H1 (cell line): ENCODE measurements at regions of chr19 and their contacts with region 1.

Region 1: DNA sequence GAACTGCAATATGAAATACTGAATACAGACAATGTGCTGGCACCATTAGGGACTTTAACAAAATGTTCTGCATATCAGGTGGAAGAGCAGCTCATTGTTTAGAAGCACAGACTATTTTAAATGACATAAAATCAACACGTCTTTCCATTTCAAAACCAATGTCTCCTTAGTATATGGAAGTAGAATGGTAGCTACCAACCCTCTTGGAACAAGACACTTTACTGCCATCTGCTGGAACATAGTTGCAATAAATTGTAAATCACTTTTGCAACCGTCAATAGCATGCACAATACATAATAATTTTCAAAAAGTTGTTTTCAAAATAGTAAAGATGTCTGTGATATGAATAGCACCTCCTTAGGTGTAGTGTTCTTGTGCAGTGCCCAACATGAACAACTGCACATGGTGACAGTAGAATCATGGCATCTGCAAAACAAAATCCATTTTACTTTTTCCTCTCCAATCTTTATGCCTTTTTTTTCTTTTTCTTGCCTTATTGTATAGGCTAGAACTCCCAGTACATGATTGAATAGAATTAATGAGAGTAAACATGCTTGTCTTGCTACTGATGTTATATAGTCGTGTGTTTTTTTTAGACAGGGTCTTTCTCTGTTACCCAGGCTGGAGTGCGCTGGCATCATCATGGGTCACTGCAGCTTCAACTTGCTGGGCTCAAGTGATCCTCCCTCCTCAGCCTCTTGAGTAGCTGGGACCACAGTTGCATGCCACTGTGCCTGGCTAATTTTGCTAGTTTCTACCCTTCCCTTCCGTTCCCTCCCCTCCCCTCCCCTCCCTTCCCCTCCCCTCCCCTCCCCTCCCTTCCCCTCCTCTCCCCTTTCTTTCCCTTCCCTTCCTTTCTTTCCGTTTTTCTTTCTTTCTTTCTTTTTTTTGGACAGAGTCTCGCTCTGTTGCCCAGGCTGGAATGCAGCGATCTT is 7.8 kb upstream of the LYPD5 start:
- DNase-seq: no peak
- H3K4me3 ChIP-seq: no peak overlapping the region
- H3K27ac ChIP-seq: no peak overlapping the region
- H3K4me1 ChIP-seq: no peaks in the 10 kb centered on the region
- H3K27me3 ChIP-seq: no peaks in the 10 kb centered on the region; a peak in 1 of 7 replicates
- CTCF ChIP-seq: peak in 2 of 3 experiments; percentile 40 to 46; a peak in 2 of 4 replicates
- EP300 ChIP-seq: no peak
- POLR2A ChIP-seq: no peak
- RAD21 ChIP-seq: peak; percentile 73

Region 2: GRCh38 chr19:43606569-43607229 is 203.3 kb before region 1 on chr19:
- CTCF ChIA-PET with region 1: no interaction called
- POLR2A ChIA-PET with region 1: no interaction called
- DNase-seq: no peak
- H3K4me3 ChIP-seq: no peak overlapping the region
- H3K27ac ChIP-seq: no peak overlapping the region
- H3K4me1 ChIP-seq: no peaks in the 10 kb centered on the region
- H3K27me3 ChIP-seq: no peaks in the 10 kb centered on the region
- CTCF ChIP-seq: no peak
- EP300 ChIP-seq: no peak
- POLR2A ChIP-seq: no peak
- RAD21 ChIP-seq: no peak

Region 3: GRCh38 chr19:43743022-43743421 is 67.0 kb before region 1 on chr19:
- CTCF ChIA-PET with region 1: interaction called, 23 read pairs
- POLR2A ChIA-PET with region 1: interaction called, 3 read pairs
- DNase-seq: no peak
- H3K4me3 ChIP-seq: no peak overlapping the region
- H3K27ac ChIP-seq: no peak overlapping the region
- H3K4me1 ChIP-seq: no peaks in the 10 kb centered on the region
- H3K27me3 ChIP-seq: no peaks in the 10 kb centered on the region
- CTCF ChIP-seq: no peak
- EP300 ChIP-seq: no peak
- POLR2A ChIP-seq: no peak
- RAD21 ChIP-seq: no peak

Region 4: GRCh38 chr19:43765109-43765876 is 44.7 kb before region 1 on chr19:
- CTCF ChIA-PET with region 1: interaction called, 67 read pairs
- POLR2A ChIA-PET with region 1: no interaction called
- DNase-seq: no peak
- H3K4me3 ChIP-seq: no peak overlapping the region
- H3K27ac ChIP-seq: no peak overlapping the region
- H3K4me1 ChIP-seq: peaks cover 0 to 4% (median 2%) of the 10 kb centered on the region in 4 experiments; a peak in 3 of 7 replicates
- H3K27me3 ChIP-seq: peaks cover 0 to 4% (median 0%) of the 10 kb centered on the region in 4 experiments; a peak in 2 of 7 replicates
- CTCF ChIP-seq: no peak
- EP300 ChIP-seq: no peak
- POLR2A ChIP-seq: no peak
- RAD21 ChIP-seq: no peak

Region 5: GRCh38 chr19:43798026-43798545 is 11.9 kb before region 1 on chr19:
- CTCF ChIA-PET with region 1: interaction called, 11 read pairs
- POLR2A ChIA-PET with region 1: no interaction called
- DNase-seq: no peak
- H3K4me3 ChIP-seq: peak overlapping the region; percentile 58 to 69 (median 60)
- H3K27ac ChIP-seq: no peak overlapping the region
- H3K4me1 ChIP-seq: peaks cover 0 to 5% (median 3%) of the 10 kb centered on the region in 4 experiments; a peak in 5 of 7 replicates
- H3K27me3 ChIP-seq: peaks cover 4 to 36% (median 24%) of the 10 kb centered on the region in 4 experiments
- CTCF ChIP-seq: no peak
- EP300 ChIP-seq: no peak
- POLR2A ChIP-seq: no peak
- RAD21 ChIP-seq: no peak

Region 6: DNA sequence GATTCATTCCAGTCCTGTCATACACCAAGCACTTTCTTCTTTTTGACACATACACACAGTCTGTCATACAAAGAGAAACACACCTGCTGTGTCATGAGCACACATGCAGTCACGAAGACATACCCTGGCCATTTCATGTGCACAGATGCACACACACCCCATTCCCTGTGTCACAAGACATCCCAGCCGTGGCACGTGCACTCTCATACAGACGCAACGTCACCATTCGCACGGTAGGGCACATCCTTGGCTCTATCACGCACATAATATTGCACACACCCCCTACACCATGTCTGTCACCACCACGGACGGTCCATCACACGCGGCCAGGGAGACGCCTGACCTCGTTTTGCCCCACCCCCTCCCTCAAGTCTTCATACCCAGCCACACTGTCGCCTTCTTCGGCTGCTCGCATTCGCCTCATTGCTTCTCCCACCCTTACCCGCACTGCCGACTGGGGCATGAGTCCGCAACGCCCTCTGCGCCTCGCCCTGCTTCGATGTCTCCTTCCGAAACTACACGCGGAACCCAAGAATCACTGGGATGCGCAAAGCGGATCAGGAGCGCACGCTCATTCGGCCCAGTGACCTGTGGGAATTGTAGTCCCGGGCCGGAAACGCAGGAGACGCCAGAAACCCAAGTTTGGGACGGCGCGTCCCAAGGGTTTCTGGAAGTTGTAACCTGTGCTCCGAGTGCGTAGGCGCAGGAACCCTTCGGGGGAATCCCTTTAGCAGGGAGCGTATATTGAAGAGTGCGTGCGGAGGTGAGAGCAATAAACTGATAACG is 10.3 kb after region 1 on chr19:
- CTCF ChIA-PET with region 1: interaction called, 13 read pairs
- POLR2A ChIA-PET with region 1: interaction called, 3 read pairs
- DNase-seq: peak in 1 of 2 experiments; percentile 44
- H3K4me3 ChIP-seq: peak overlapping the region in 2 of 4 experiments; percentile 25 to 37; a peak in 2 of 8 replicates
- H3K27ac ChIP-seq: no peak overlapping the region
- H3K4me1 ChIP-seq: no peaks in the 10 kb centered on the region; a peak in 1 of 7 replicates
- H3K27me3 ChIP-seq: peaks cover 0 to 11% (median 2%) of the 10 kb centered on the region in 4 experiments; a peak in 3 of 7 replicates
- CTCF ChIP-seq: no peak
- EP300 ChIP-seq: no peak
- POLR2A ChIP-seq: no peak
- RAD21 ChIP-seq: no peak